IMR-90 (cell line): ENCODE measurements at regions of chr10 and their contacts with region 1.

Region 1: GRCh38 chr10:116690356-116691322 is 51.7 kb downstream of the HSPA12A start:
- DNase-seq: peak; percentile 28
- ATAC-seq: no peak
- H3K4me3 ChIP-seq: no peak overlapping the region
- H3K27ac ChIP-seq: no peak overlapping the region
- H3K4me1 ChIP-seq: peaks cover 20% of the 10 kb centered on the region
- H3K27me3 ChIP-seq: no peaks in the 10 kb centered on the region
- CTCF ChIP-seq: 0 out of 2 replicates have a peak, but pooled peaks have one; percentile 23
- POLR2A ChIP-seq: no peak
- RAD21 ChIP-seq: peak; percentile 32; the same call in 1 of the 2 replicates

Region 2: DNA sequence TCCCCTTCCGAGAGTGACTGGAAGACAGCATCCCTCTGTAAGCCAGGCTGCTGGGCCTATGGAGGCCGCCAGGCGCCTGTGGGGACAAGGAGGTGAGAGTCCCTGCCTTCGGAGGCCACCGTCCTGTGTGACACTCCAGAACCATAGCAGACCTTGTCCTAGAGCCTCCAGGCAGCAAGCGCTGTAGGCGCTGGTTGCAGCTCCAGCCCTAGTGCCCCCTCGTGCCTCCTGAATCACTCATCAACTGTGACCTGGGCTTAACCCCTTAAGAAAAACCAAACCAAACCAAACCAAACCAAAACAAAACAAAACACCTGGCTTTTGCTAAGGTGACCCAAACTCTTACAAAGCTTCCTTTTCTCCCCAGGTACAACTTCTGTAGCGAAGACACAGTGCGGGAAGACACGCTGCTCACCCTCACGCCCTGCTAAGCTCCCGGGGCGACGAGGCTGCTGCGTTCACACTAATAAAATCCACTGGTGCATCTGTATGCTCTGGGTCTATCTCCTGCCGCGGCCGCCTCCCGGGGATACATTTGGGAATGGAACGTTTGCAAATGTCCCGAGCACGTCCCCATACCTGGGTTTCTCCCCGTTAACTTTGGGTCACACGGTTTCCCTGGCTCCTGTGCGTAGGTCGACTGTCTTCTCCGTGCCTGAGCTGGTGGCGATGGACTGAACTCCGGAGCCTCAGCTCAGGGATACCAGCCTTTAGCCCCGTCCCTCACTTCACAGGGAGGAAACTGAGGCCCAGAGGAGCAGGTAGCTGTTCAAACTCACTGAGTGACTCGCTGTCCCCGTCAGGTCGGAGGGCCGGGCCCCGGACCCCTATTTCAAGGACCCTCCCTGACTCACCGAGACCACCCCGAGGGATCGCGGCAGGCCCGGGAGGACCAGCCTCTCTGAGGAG is 81.7 kb before region 1 on chr10:
- CTCF ChIA-PET with region 1: no interaction called
- POLR2A ChIA-PET with region 1: no interaction called
- dilution Hi-C with region 1: no loop called
- in situ Hi-C with region 1: no loop called
- intact Hi-C with region 1: no loop called
- DNase-seq: no peak
- ATAC-seq: 0 out of 2 replicates have a peak, but pooled peaks have one; percentile 16
- H3K4me3 ChIP-seq: no peak overlapping the region
- H3K27ac ChIP-seq: no peak overlapping the region
- H3K4me1 ChIP-seq: no peaks in the 10 kb centered on the region; the same call in 1 of the 2 replicates
- H3K27me3 ChIP-seq: peaks cover 6% of the 10 kb centered on the region; the same call in 1 of the 2 replicates
- CTCF ChIP-seq: no peak
- POLR2A ChIP-seq: no peak
- RAD21 ChIP-seq: no peak

Region 3: DNA sequence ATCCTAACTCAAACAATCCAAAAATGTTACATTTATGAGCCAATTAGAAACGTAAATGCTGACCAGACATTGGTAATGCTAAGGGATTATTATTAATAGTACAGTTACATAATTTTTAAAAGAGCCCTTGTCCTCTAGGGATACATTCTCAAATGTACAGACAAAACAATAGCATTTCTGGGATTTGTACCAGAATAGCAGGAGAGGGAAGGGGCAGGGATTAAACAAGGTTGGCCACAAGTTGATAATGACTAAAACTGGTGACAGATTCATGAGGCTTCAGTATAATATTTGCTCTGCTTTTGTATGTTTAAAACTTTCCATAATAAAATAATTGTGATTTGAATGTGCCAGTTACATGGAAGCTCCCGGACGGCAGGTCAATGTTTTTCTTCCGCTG is 24.7 kb after region 1 on chr10:
- CTCF ChIA-PET with region 1: no interaction called
- POLR2A ChIA-PET with region 1: interaction called, 14 read pairs
- dilution Hi-C with region 1: no loop called
- in situ Hi-C with region 1: no loop called
- intact Hi-C with region 1: no loop called
- DNase-seq: no peak
- ATAC-seq: no peak
- H3K4me3 ChIP-seq: no peak overlapping the region
- H3K27ac ChIP-seq: no peak overlapping the region
- H3K4me1 ChIP-seq: peaks cover 9% of the 10 kb centered on the region
- H3K27me3 ChIP-seq: no peaks in the 10 kb centered on the region
- CTCF ChIP-seq: no peak
- POLR2A ChIP-seq: no peak
- RAD21 ChIP-seq: no peak

Region 4: DNA sequence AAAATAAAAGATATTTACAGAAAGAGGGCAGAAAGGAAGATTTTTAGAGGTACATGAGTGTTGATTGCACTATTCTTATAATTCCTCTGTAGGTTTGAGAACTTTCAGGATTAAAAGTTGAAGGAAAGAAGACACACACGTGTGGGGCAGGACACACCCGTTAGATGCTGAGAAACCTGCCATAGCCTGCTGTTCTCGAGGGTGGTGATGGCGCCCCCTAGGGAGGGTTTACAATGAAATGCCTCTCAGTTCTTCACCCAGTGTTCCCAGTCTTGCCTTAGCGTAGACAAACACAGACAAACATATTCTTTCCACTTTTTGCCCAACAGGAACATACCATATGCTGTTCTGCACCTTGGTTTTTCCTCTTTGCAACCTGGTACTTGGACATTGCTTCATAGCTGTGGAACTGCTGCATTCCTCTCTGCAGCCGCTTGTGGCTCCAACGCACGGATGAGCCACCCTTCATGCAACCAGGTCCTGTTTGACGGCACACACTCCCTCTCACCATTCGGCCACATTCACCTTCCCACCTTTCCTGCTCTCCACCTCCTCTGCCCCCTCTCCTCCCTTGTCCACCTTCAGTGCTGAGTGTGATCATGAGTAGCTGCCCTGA is 75.0 kb after region 1 on chr10:
- CTCF ChIA-PET with region 1: no interaction called
- POLR2A ChIA-PET with region 1: no interaction called
- dilution Hi-C with region 1: no loop called
- in situ Hi-C with region 1: no loop called
- intact Hi-C with region 1: no loop called
- DNase-seq: no peak
- ATAC-seq: no peak
- H3K4me3 ChIP-seq: no peak overlapping the region
- H3K27ac ChIP-seq: no peak overlapping the region
- H3K4me1 ChIP-seq: peaks cover 10% of the 10 kb centered on the region
- H3K27me3 ChIP-seq: no peaks in the 10 kb centered on the region
- CTCF ChIP-seq: peak; percentile 29; the same call in 1 of the 2 replicates
- POLR2A ChIP-seq: no peak
- RAD21 ChIP-seq: peak; percentile 23; the same call in 1 of the 2 replicates

Region 5: DNA sequence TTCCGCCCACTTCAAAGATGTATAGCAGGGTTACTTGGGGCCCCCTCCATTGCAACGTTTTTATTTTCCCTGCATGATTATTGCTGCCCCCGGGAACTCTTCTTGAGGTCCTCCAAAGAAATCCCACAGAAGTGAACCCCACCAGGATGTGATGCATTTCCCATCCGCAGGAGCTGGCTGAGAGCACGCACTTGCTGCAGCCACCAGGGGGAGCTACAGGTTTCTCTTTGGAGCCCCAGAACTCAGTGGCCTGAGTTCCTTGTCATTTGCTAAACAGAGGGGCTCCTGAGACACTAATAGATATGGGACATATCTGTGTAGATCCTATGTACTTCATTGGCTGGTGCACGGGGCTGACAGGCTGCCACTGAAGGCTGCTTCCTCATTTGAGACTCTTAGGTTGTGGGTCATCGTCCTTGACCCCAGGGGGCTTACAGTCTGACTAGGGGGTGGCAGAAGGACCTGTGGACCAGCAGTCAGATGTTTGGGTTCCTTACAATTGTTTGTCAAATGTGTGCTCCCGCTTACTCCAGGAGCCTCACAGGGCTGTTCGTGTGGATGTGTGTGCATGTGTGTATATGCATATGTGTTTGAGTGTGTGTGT is 106.4 kb after region 1 on chr10:
- CTCF ChIA-PET with region 1: interaction called, 4 read pairs
- POLR2A ChIA-PET with region 1: no interaction called
- dilution Hi-C with region 1: loop called (anchors 25 kb)
- in situ Hi-C with region 1: no loop called
- intact Hi-C with region 1: no loop called
- DNase-seq: peak; percentile 61
- ATAC-seq: peak; percentile 96
- H3K4me3 ChIP-seq: no peak overlapping the region
- H3K27ac ChIP-seq: no peak overlapping the region
- H3K4me1 ChIP-seq: no peaks in the 10 kb centered on the region
- H3K27me3 ChIP-seq: peaks cover 13% of the 10 kb centered on the region
- CTCF ChIP-seq: peak; percentile 94
- POLR2A ChIP-seq: peak; percentile 46; the same call in 1 of the 2 replicates
- RAD21 ChIP-seq: peak; percentile 96